B cell (primary cell): ENCODE measurements at regions of chr17 and their contacts with region 1.

Region 1: GRCh38 chr17:5019475-5019956 is 15.7 kb downstream of the SLC52A1 start:
- DNase-seq: peak; percentile 62
- ATAC-seq: peak; percentile 52
- H3K4me3 ChIP-seq: no peak overlapping the region
- H3K4me3 Mint-ChIP-seq: no peak overlapping the region
- H3K27ac ChIP-seq: no peak overlapping the region
- H3K27ac Mint-ChIP-seq: peak overlapping the region; percentile 50
- H3K4me1 ChIP-seq: peaks cover 6 to 14% of the 10 kb centered on the region in 2 donors
- H3K4me1 Mint-ChIP-seq: peaks cover 13% of the 10 kb centered on the region
- H3K27me3 ChIP-seq: peaks cover 0 to 32% (median 1%) of the 10 kb centered on the region in 4 experiments
- H3K27me3 Mint-ChIP-seq: no peaks in the 10 kb centered on the region
- CTCF ChIP-seq: no peak

Region 2: DNA sequence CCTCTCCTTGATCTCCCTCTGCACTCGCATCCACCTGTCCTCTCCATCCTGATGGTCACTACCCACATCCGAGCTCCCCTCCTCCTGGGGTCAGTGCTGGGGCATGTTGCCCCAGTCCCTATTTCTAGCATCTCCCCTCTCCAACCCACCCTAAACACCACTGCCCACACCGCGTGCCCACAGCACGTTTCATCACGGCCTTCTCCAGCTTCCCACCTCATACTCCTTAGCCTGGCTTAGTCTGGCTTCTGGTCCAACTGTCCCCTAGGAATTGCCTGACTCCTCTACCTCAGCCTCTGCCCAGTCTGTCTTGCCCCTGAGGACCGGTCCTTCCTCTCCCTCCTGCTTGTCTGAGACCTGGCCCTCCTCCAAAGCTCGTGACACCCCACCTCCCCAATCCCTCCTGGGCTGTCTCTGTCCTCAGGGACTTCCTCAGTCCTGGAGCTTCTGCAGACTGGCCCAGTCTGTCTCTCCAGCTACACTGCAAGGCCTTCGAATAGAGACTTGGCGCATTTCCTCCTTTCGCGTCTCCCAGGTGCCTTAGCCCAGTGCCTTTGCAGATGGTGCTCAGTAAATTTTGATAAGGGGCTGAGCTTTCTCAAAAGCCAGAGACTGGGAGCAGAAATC is 382.9 kb before region 1 on chr17:
- CTCF ChIA-PET with region 1: no interaction called
- POLR2A ChIA-PET with region 1: interaction called, 11 read pairs
- intact Hi-C with region 1: no loop called
- DNase-seq: no peak
- ATAC-seq: no peak
- H3K4me3 ChIP-seq: peak overlapping the region in 1 of 5 experiments; percentile 33
- H3K4me3 Mint-ChIP-seq: peak overlapping the region; percentile 69
- H3K27ac ChIP-seq: no peak overlapping the region
- H3K27ac Mint-ChIP-seq: peak overlapping the region; percentile 1
- H3K4me1 ChIP-seq: peaks cover 41 to 48% of the 10 kb centered on the region in 2 donors
- H3K4me1 Mint-ChIP-seq: peaks cover 44% of the 10 kb centered on the region
- H3K27me3 ChIP-seq: peaks cover 0 to 31% (median 8%) of the 10 kb centered on the region in 4 experiments
- H3K27me3 Mint-ChIP-seq: peaks cover 14% of the 10 kb centered on the region
- CTCF ChIP-seq: no peak

Region 3: DNA sequence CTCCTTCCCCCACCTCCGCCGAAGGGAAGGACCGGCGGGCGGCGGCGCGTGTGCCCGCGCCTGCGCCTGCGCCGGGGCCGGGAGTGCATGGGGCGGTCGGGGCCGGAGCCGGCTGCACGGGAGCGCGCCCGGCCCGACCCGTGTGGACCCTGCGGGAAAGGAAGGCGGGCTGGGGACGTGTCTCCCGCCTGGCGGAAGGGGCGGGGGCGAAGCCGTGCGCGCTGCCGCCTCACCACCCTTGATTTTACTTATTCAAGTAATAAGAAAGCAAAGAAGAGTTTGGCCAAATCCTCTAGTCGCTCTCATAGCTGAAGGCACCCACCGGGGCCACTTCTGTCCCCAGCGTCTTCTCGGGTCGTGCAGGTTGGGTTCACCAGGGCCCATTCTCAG is 70.6 kb before region 1 on chr17:
- CTCF ChIA-PET with region 1: no interaction called
- POLR2A ChIA-PET with region 1: no interaction called
- intact Hi-C with region 1: loop called (anchors 5 kb)
- DNase-seq: peak; percentile 90
- ATAC-seq: peak; percentile 50
- H3K4me3 ChIP-seq: peak overlapping the region; percentile 59 to 99 (median 96)
- H3K4me3 Mint-ChIP-seq: peak overlapping the region; percentile 98
- H3K27ac ChIP-seq: peak overlapping the region; percentile 73 to 93
- H3K27ac Mint-ChIP-seq: peak overlapping the region; percentile 99
- H3K4me1 ChIP-seq: peaks cover 37 to 45% of the 10 kb centered on the region in 2 donors
- H3K4me1 Mint-ChIP-seq: peaks cover 46% of the 10 kb centered on the region
- H3K27me3 ChIP-seq: no peaks in the 10 kb centered on the region
- H3K27me3 Mint-ChIP-seq: no peaks in the 10 kb centered on the region
- CTCF ChIP-seq: no peak

Region 4: GRCh38 chr17:4980644-4981216 is 38.8 kb before region 1 on chr17:
- CTCF ChIA-PET with region 1: interaction called, 12 read pairs
- POLR2A ChIA-PET with region 1: interaction called, 3 read pairs
- intact Hi-C with region 1: loop called (anchors 5 kb)
- DNase-seq: peak; percentile 66
- ATAC-seq: peak; percentile 75
- H3K4me3 ChIP-seq: no peak overlapping the region
- H3K4me3 Mint-ChIP-seq: peak overlapping the region; percentile 29
- H3K27ac ChIP-seq: no peak overlapping the region
- H3K27ac Mint-ChIP-seq: peak overlapping the region; percentile 87
- H3K4me1 ChIP-seq: peaks cover 18 to 35% of the 10 kb centered on the region in 2 donors
- H3K4me1 Mint-ChIP-seq: peaks cover 41% of the 10 kb centered on the region
- H3K27me3 ChIP-seq: no peaks in the 10 kb centered on the region
- H3K27me3 Mint-ChIP-seq: no peaks in the 10 kb centered on the region
- CTCF ChIP-seq: peak; percentile 77

Region 5: DNA sequence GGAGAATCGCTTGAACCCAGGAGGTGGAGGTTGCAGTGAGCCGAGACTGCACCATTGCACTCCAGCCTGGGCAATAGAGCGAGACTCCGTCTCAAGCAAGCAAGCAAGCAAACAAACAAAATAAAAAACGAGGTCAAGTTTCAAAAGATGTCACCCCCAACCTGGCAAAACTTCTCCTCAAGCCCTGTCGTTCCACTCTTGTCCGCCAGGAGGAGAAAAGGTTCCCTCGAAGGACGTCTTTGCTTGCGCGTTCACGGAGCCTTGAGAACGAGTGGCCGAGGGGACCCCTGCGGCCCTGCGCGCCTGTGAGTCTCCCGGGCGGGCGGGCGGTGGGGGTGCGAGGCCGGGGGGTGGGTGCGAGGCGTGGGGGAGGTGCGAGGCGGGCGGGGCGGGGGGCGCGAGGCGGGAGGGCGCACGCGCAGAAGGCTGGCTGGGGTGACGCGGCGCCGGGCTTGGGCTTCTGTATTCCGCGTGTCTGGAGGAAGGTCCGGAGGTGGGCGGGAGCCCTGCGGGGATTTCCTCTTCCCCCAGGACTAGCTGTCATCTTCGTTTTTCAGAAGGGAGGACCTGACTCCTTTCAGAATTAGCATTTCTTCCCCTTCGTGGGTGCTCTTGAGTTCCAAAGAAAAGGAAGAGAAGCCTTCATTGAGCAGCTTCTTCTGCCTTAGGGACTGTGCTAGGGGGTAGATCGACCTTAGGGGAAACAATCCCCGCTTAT is 12.0 kb after region 1 on chr17:
- CTCF ChIA-PET with region 1: interaction called, 34 read pairs
- POLR2A ChIA-PET with region 1: interaction called, 3 read pairs
- intact Hi-C with region 1: no loop called
- DNase-seq: peak; percentile 88
- ATAC-seq: peak; percentile 87
- H3K4me3 ChIP-seq: peak overlapping the region; percentile 34 to 67 (median 38)
- H3K4me3 Mint-ChIP-seq: peak overlapping the region; percentile 89
- H3K27ac ChIP-seq: peak overlapping the region; percentile 24 to 62
- H3K27ac Mint-ChIP-seq: peak overlapping the region; percentile 67
- H3K4me1 ChIP-seq: peaks cover 7 to 18% of the 10 kb centered on the region in 2 donors
- H3K4me1 Mint-ChIP-seq: peaks cover 25% of the 10 kb centered on the region
- H3K27me3 ChIP-seq: peaks cover 0 to 21% (median 5%) of the 10 kb centered on the region in 4 experiments
- H3K27me3 Mint-ChIP-seq: no peaks in the 10 kb centered on the region
- CTCF ChIP-seq: peak; percentile 80

Region 6: DNA sequence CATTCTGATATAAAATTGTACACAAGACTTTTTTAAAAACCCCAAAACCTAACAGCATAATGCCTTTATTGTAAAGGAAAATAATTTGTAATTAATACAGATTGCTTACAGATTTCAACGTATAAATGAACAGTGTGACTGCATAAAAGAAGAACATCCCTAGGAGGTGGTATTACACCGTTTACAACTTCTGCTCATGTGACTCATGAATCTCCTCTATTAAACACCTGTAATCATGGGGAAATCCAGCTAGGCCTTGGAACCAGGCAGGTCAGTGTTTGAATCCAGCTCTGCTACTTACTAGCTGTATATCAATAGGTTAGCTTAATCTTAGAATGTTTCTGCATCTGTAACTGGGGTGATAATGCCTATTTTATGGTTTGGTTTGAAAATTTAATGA is 277.7 kb after region 1 on chr17:
- CTCF ChIA-PET with region 1: no interaction called
- POLR2A ChIA-PET with region 1: no interaction called
- intact Hi-C with region 1: no loop called
- DNase-seq: peak; percentile 26
- ATAC-seq: no peak
- H3K4me3 ChIP-seq: no peak overlapping the region
- H3K4me3 Mint-ChIP-seq: no peak overlapping the region
- H3K27ac ChIP-seq: peak overlapping the region in 1 of 2 donors; percentile 12
- H3K27ac Mint-ChIP-seq: peak overlapping the region; percentile 73
- H3K4me1 ChIP-seq: peaks cover 7 to 16% of the 10 kb centered on the region in 2 donors
- H3K4me1 Mint-ChIP-seq: peaks cover 55% of the 10 kb centered on the region
- H3K27me3 ChIP-seq: no peaks in the 10 kb centered on the region
- H3K27me3 Mint-ChIP-seq: no peaks in the 10 kb centered on the region
- CTCF ChIP-seq: no peak